Activated CD4-positive, alpha-beta memory T cell treated with anti-CD3 and anti-CD28 coated beads for 36 hours (primary cell): ENCODE measurements at regions of chr18 and their contacts with region 1.

Region 1: GRCh38 chr18:11733031-11733430 is 44.0 kb downstream of the GNAL start:
- DNase-seq: peak; percentile 83
- H3K4me3 Mint-ChIP-seq: no peak overlapping the region
- H3K27ac Mint-ChIP-seq: no peak overlapping the region
- H3K4me1 Mint-ChIP-seq: no peaks in the 10 kb centered on the region
- H3K27me3 Mint-ChIP-seq: peaks cover 37% of the 10 kb centered on the region

Region 2: DNA sequence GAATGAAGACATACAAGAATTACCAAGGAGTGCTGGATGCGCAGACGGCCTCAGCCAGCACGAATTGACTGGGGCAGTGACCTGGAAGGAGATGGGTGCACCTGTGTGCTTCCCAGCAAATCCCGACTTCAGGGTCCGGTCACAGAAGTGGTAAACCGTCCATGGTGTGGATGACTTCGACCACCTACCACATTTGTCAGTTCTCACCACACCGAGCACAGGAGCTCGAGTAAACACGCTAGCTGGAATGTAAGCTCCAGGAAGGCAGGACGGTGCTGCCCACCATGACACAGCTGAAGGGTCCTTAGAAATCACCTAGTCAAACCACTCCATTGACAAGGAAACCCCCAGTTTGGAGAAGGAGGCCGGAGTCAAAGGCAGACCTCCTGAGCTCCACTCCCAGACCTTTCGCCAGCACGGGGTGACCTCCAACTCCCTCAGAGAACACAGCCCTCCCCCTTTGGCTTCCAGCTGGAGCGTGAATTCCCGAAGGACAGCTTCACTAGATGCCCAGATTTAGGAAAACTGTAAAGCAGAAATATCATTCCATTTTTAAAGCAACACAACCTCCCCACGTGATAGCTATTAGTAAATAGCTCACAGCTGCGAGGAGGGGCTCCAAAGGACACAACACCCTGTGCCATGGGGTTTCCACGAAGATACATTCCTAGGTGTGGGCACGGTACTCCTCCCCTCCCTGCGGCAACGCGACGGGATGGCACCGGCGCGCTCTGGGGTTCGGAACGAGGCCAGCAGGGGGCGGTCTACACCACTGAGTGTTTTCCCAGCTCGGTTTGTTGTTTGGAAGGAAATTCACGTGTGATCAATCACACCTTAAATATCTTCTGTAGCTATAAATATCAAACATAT is 78.1 kb before region 1 on chr18:
- CTCF ChIA-PET with region 1: interaction called, 33 read pairs
- POLR2A ChIA-PET with region 1: no interaction called
- intact Hi-C with region 1: loop called (anchors 5 kb)
- DNase-seq: peak; percentile 64
- H3K4me3 Mint-ChIP-seq: no peak overlapping the region
- H3K27ac Mint-ChIP-seq: no peak overlapping the region
- H3K4me1 Mint-ChIP-seq: peaks cover 5% of the 10 kb centered on the region
- H3K27me3 Mint-ChIP-seq: peaks cover 27% of the 10 kb centered on the region

Region 3: DNA sequence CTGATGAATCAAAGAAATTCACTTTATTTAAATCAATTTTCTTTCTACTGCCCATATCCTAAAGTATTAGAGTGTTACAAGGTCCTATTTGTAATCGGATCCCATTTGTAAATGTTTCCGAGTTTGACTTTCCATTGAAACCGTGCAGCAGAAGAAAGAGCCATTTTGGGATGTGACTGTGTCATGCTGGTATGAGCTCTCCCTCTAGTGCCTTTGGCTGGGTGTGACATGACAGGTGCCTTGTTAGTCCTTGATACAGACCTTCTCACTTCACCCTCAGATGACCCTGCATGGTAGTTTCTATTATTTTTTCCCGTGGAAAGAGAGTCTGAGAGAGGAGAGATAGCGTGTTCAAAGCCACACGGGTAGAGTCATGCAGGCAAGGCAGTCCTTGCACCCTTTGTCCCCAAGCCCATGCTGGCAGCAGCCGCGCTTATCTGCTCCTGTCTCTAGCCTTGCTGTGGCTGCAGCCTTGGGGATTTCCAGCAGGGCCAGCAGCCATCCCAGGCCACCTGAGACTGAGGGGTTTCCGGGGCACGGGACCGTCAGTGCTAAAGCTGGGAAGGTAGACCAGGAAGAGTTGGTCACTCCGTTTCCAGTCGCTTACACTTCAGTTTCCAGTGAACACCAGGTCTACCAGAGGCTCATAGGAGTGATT is 139.6 kb after region 1 on chr18:
- CTCF ChIA-PET with region 1: interaction called, 8 read pairs
- POLR2A ChIA-PET with region 1: no interaction called
- intact Hi-C with region 1: loop called (anchors 5 kb)
- DNase-seq: peak; percentile 20
- H3K4me3 Mint-ChIP-seq: no peak overlapping the region
- H3K27ac Mint-ChIP-seq: no peak overlapping the region
- H3K4me1 Mint-ChIP-seq: peaks cover 6% of the 10 kb centered on the region
- H3K27me3 Mint-ChIP-seq: peaks cover 7% of the 10 kb centered on the region

Region 4: DNA sequence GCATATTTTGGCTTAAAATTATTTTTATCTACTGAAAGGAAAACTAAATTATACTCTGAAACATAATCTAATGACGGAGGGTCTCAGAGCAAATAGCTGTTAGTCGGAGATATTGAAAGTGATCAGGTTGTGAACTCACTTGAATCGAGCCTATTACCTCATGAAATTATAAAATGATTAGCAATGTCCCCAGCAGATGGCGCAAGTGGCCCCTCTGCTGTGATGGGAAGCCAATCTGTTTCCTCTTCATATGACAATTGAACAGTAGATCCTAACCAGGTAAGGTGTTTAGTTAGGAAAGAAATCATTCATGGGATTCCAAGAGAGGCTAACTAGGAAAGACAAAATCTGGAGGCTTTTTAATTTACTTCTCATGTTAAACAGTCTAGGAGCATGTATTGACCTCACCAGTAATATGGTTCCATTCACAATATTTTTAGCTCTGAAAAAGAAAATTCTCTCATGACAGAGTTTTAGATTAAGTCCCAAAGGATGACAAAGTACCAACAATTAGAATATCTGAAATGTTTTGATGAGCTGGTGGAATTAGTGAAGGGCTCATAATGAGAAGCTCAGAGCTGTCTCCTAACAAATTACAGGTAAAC is 204.9 kb after region 1 on chr18:
- CTCF ChIA-PET with region 1: interaction called, 11 read pairs
- POLR2A ChIA-PET with region 1: no interaction called
- intact Hi-C with region 1: loop called (anchors 5 kb)
- DNase-seq: peak; percentile 79
- H3K4me3 Mint-ChIP-seq: no peak overlapping the region
- H3K27ac Mint-ChIP-seq: no peak overlapping the region
- H3K4me1 Mint-ChIP-seq: no peaks in the 10 kb centered on the region
- H3K27me3 Mint-ChIP-seq: no peaks in the 10 kb centered on the region